CD4-positive, alpha-beta T cell (primary cell): ENCODE measurements at regions of chr7 and their contacts with region 1.

Region 1: DNA sequence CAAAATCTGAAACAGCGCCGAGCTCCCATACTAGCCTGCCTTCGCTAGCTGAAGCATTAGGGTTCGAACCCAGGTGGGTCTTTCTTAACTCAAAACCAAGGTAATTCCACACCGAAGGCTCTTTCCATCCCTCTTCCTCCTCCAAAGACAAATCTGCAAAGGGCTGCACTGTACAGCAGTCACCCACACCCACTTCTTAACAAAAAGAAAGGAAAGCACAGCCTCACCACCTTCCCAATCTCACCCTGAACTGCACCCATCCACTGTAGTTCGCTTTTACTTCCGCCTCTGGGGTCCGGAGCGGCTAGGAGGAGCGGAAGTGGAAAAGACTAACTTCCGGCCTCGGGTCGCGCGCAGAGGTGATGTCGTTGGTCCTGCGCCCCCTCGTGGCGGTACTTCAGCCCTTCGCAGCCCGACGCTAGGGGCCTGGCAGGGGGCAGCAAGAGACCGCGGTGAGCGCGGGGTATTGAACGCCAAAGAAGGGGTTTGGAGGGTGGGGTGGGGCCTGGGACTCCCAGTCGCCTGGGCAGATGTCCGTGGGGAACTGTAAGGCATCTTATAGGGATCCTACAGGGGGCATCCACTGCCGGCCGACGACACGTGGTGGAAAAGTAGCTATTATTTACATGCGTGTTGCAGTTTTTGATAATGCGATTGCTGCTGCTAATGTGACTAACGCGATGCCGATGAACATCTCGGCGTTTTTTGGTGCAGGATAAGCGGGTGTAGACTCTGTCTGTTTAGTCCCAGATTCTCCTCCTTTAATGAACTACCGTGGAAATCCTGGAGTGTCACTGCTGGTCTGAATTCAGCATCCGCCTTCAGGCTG is at the start of gene MTERF1:
- DNase-seq: peak; percentile 88 to 97 (median 92)
- ATAC-seq: peak; percentile 95
- H3K4me3 ChIP-seq: peak within 1 kb of the TSS; percentile 78
- H3K4me3 Mint-ChIP-seq: peak within 1 kb of the TSS; percentile 96
- H3K27ac ChIP-seq: peak within 1 kb of the TSS; percentile 26 to 64
- H3K27ac Mint-ChIP-seq: peak within 1 kb of the TSS; percentile 87
- H3K4me1 ChIP-seq: peaks cover 20% of the 10 kb centered on the region
- H3K4me1 Mint-ChIP-seq: peaks cover 41% of the 10 kb centered on the region
- H3K27me3 ChIP-seq: no peaks in the 10 kb centered on the region
- H3K27me3 Mint-ChIP-seq: no peaks in the 10 kb centered on the region
- CTCF ChIP-seq: peak; percentile 98
- total RNA-seq, gene MTERF1: 11.0 to 11.9 TPM

Region 2: DNA sequence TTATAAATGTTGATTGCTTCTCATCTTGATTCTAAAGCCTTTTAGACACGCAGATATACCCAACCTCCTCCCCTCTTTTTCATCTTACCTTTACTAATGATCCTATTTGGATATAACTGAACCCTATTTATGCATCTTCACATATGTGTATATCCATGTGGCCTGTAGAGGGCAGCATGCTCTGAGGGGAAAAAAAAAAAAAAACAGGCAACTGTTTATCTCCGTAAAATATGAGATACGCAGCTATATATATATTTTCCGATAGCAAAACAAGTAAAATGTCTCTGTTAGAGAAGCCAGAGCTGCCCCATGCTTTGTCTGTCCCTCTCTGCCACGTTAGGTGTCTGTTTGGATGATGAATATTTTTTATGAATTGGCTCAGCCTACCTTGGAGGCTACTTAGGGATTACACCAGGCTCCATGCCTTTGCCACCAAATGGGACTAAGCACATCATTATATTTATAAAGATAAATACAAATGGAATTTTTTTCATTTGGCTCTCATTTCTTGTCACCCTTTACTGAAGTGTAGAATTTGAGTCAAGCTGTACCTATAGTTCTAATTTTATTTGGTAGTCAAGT is 791.2 kb before region 1 on chr7:
- CTCF ChIA-PET with region 1: no interaction called
- POLR2A ChIA-PET with region 1: no interaction called
- intact Hi-C with region 1: loop called in 1 of 2 experiments (anchors 5 kb)
- DNase-seq: peak in 3 of 14 experiments; percentile 39 to 57 (median 45)
- ATAC-seq: peak; percentile 38
- H3K4me3 ChIP-seq: no peak overlapping the region
- H3K4me3 Mint-ChIP-seq: no peak overlapping the region
- H3K27ac ChIP-seq: no peak overlapping the region
- H3K27ac Mint-ChIP-seq: no peak overlapping the region
- H3K4me1 ChIP-seq: peaks cover 12% of the 10 kb centered on the region
- H3K4me1 Mint-ChIP-seq: peaks cover 19% of the 10 kb centered on the region
- H3K27me3 ChIP-seq: no peaks in the 10 kb centered on the region
- H3K27me3 Mint-ChIP-seq: no peaks in the 10 kb centered on the region
- CTCF ChIP-seq: peak; percentile 70

Region 3: GRCh38 chr7:92134271-92135051 is 253.8 kb after region 1 on chr7 and contains the start of gene CYP51A1:
- CTCF ChIA-PET with region 1: no interaction called
- POLR2A ChIA-PET with region 1: no interaction called
- intact Hi-C with region 1: loop called in 1 of 2 experiments (anchors 5 kb)
- DNase-seq: peak; percentile 84 to 96 (median 91)
- ATAC-seq: peak; percentile 82
- H3K4me3 ChIP-seq: peak within 1 kb of the TSS; percentile 92
- H3K4me3 Mint-ChIP-seq: peak within 1 kb of the TSS; percentile 96
- H3K27ac ChIP-seq: peak within 1 kb of the TSS; percentile 84 to 94
- H3K27ac Mint-ChIP-seq: peak within 1 kb of the TSS; percentile 98
- H3K4me1 ChIP-seq: peaks cover 21% of the 10 kb centered on the region
- H3K4me1 Mint-ChIP-seq: peaks cover 40% of the 10 kb centered on the region
- H3K27me3 ChIP-seq: no peaks in the 10 kb centered on the region
- H3K27me3 Mint-ChIP-seq: no peaks in the 10 kb centered on the region
- CTCF ChIP-seq: no peak
- total RNA-seq, gene CYP51A1: 25.9 to 30.9 TPM

Region 4: GRCh38 chr7:92245487-92246362 is 365.1 kb after region 1 on chr7 and contains the starts of genes ANKIB1 and KRIT1:
- CTCF ChIA-PET with region 1: no interaction called
- POLR2A ChIA-PET with region 1: interaction called, 4 read pairs
- intact Hi-C with region 1: loop called in 1 of 2 experiments (anchors 5 kb)
- DNase-seq: peak; percentile 76 to 93 (median 81)
- ATAC-seq: peak; percentile 78
- H3K4me3 ChIP-seq: peak within 1 kb of the TSS; percentile 87
- H3K4me3 Mint-ChIP-seq: peak within 1 kb of the TSS; percentile 97
- H3K27ac ChIP-seq: peak within 1 kb of the TSS; percentile 86 to 96
- H3K27ac Mint-ChIP-seq: peak within 1 kb of the TSS; percentile 99
- H3K4me1 ChIP-seq: peaks cover 17% of the 10 kb centered on the region
- H3K4me1 Mint-ChIP-seq: peaks cover 61% of the 10 kb centered on the region
- H3K27me3 ChIP-seq: no peaks in the 10 kb centered on the region
- H3K27me3 Mint-ChIP-seq: no peaks in the 10 kb centered on the region
- CTCF ChIP-seq: no peak
- total RNA-seq, gene ANKIB1: 60.0 to 66.9 TPM
- total RNA-seq, gene KRIT1: 28.6 to 28.7 TPM

Region 5: DNA sequence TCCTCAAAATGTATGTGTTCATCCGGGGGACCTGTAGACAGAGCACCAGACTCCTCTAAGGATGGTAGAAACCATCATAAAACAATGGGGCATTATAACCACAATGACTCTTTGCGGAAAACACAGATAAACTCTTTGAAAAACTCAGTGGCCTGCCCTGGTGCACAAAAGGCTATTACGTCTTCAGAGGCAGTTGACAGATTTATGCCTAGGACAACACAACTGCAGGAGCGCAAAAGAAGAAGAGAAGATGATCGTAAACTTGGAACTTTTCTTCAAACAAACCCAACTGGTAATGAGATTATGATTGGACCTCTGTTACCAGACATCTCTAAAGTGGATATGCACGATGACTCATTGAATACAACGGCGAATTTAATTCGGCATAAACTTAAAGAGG is 653.9 kb after region 1 on chr7:
- CTCF ChIA-PET with region 1: no interaction called
- POLR2A ChIA-PET with region 1: no interaction called
- intact Hi-C with region 1: loop called (anchors 2 to 5 kb)
- DNase-seq: no peak
- ATAC-seq: no peak
- H3K4me3 ChIP-seq: no peak overlapping the region
- H3K4me3 Mint-ChIP-seq: no peak overlapping the region
- H3K27ac ChIP-seq: no peak overlapping the region
- H3K27ac Mint-ChIP-seq: no peak overlapping the region
- H3K4me1 ChIP-seq: peaks cover 8% of the 10 kb centered on the region
- H3K4me1 Mint-ChIP-seq: peaks cover 47% of the 10 kb centered on the region
- H3K27me3 ChIP-seq: no peaks in the 10 kb centered on the region
- H3K27me3 Mint-ChIP-seq: no peaks in the 10 kb centered on the region
- CTCF ChIP-seq: no peak